IMR-90 (cell line): ENCODE measurements at regions of chr3 and their contacts with region 1.

Region 1: DNA sequence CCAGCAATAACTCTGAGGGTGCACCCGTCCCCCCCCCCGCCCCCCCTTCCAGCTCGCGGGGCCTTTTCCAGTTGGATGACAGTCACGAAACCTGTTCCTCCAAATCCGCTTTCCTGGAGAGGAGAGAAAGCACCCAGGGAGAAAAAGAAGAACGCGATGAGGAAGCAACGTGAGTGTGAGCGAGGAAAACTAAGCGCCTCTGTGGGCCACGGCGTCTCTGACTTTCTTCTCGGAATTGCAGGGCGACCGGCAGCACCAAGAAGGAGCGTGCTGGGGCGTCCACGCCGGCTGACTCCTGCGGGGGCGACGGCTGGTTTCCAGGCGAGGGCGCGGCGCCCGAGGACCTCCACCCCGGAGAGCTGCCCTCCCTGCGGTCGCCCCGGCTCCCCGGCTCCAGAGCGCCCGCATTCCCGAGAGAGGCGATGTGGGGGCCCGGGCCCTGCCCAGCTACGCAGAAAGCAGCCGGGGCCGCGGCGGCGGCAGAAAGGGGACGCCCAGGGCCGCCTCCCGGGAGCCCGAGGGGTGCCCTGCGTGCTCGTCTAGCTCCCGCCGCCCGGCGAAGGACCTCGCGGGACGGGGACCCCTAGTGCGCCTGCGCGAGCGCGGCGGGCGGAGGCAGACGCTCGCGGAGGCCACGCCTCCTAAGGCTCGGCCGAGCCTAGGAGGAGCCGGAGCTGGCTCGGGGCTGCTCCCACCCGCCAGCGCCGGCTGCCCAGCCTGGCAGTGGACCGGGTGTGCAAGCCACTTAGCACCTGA is 15.4 kb upstream of the ADIPOQ start:
- DNase-seq: peak; percentile 72
- ATAC-seq: peak; percentile 90
- H3K4me3 ChIP-seq: peak overlapping the region; percentile 53
- H3K27ac ChIP-seq: peak overlapping the region; percentile 14; the same call in 1 of the 2 replicates
- H3K4me1 ChIP-seq: peaks cover 13% of the 10 kb centered on the region
- H3K27me3 ChIP-seq: peaks cover 30% of the 10 kb centered on the region
- CTCF ChIP-seq: no peak
- POLR2A ChIP-seq: peak; percentile 34; the same call in 1 of the 2 replicates
- RAD21 ChIP-seq: no peak

Region 2: DNA sequence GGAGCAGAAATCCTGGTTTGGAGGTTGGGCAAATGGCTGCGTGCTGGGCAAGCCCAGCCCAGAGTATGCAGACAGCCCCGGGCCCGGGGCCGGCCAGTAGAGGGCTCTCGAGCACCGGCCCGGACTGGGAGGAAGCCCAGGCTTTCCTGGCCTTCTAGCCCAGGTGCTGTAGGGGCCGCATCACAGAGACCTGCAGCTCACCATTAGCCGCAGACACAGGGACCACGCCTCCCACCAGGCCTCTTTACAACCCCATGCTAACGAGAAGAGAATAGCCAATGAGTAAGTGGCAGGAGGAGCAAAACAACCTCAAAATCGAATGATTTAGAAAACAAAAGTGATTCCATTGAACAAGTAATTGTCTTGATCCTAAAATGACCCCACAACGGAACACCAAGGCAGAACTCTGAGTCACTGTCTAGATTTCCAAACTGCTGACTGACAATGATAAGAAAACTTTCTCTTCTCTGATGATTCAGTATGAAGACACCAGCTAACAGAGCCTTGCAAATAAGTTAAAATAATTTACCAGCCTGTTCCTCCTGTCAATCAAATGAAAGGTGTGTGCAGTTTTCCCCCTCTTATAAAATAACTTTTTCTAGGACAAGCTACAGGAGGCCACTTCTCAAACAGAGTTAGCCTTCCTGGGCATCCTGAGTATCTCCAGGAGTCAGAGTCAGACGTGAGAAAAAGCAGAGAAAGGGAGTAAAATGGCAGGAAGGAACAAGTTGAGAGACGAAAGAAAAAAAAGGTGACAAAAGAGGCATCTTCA is 567.4 kb before region 1 on chr3:
- CTCF ChIA-PET with region 1: no interaction called
- POLR2A ChIA-PET with region 1: no interaction called
- dilution Hi-C with region 1: no loop called
- in situ Hi-C with region 1: no loop called
- intact Hi-C with region 1: loop called (anchors 10 kb)
- DNase-seq: peak; percentile 73
- ATAC-seq: peak; percentile 99
- H3K4me3 ChIP-seq: peak overlapping the region; percentile 6; the same call in 1 of the 2 replicates
- H3K27ac ChIP-seq: no peak overlapping the region
- H3K4me1 ChIP-seq: no peaks in the 10 kb centered on the region
- H3K27me3 ChIP-seq: peaks cover 14% of the 10 kb centered on the region
- CTCF ChIP-seq: peak; percentile 79
- POLR2A ChIP-seq: no peak
- RAD21 ChIP-seq: peak; percentile 74

Region 3: GRCh38 chr3:186806089-186807055 is 20.8 kb before region 1 on chr3 and contains the start of gene RFC4:
- CTCF ChIA-PET with region 1: no interaction called
- POLR2A ChIA-PET with region 1: no interaction called
- dilution Hi-C with region 1: no loop called
- in situ Hi-C with region 1: no loop called
- intact Hi-C with region 1: no loop called
- DNase-seq: peak; percentile 60
- ATAC-seq: peak; percentile 98
- H3K4me3 ChIP-seq: peak within 1 kb of the TSS; percentile 59
- H3K27ac ChIP-seq: peak within 1 kb of the TSS; percentile 87
- H3K4me1 ChIP-seq: no peaks in the 10 kb centered on the region
- H3K27me3 ChIP-seq: no peaks in the 10 kb centered on the region
- CTCF ChIP-seq: no peak
- POLR2A ChIP-seq: no peak
- RAD21 ChIP-seq: no peak
- total RNA-seq, gene RFC4: 19.5 and 34.4 TPM in 2 replicates

Region 4: GRCh38 chr3:186930641-186931531 is 103.7 kb after region 1 on chr3:
- CTCF ChIA-PET with region 1: no interaction called
- POLR2A ChIA-PET with region 1: no interaction called
- dilution Hi-C with region 1: no loop called
- in situ Hi-C with region 1: no loop called
- intact Hi-C with region 1: loop called (anchors 2 kb)
- DNase-seq: peak; percentile 34
- ATAC-seq: peak; percentile 53
- H3K4me3 ChIP-seq: peak overlapping the region; percentile 53
- H3K27ac ChIP-seq: peak overlapping the region; percentile 19; the same call in 1 of the 2 replicates
- H3K4me1 ChIP-seq: no peaks in the 10 kb centered on the region; the same call in 1 of the 2 replicates
- H3K27me3 ChIP-seq: peaks cover 12% of the 10 kb centered on the region
- CTCF ChIP-seq: no peak
- POLR2A ChIP-seq: no peak
- RAD21 ChIP-seq: no peak

Region 5: GRCh38 chr3:187150599-187150998 is 323.4 kb after region 1 on chr3:
- CTCF ChIA-PET with region 1: interaction called, 4 read pairs
- POLR2A ChIA-PET with region 1: no interaction called
- dilution Hi-C with region 1: no loop called
- in situ Hi-C with region 1: no loop called
- intact Hi-C with region 1: loop called (anchors 5 kb)
- DNase-seq: no peak
- ATAC-seq: no peak
- H3K4me3 ChIP-seq: no peak overlapping the region
- H3K27ac ChIP-seq: no peak overlapping the region
- H3K4me1 ChIP-seq: no peaks in the 10 kb centered on the region
- H3K27me3 ChIP-seq: peaks cover 7% of the 10 kb centered on the region
- CTCF ChIP-seq: no peak
- POLR2A ChIP-seq: no peak
- RAD21 ChIP-seq: no peak